ENCODE measurements at regions of chr22 and their contacts with region 1.

Region 1: GRCh38 chr22:33057363-33057995 is 702 bp downstream of the SYN3 start:
- DNase-seq: no peak
- H3K4me3 ChIP-seq: peak overlapping the region in 1 of 2 experiments; percentile 46; a peak in 2 of 4 replicates
- H3K27ac ChIP-seq: no peak overlapping the region
- H3K4me1 ChIP-seq: peaks cover 0 to 2% of the 10 kb centered on the region in 2 experiments; a peak in 1 of 4 replicates
- H3K27me3 ChIP-seq: no peaks in the 10 kb centered on the region; the same call in 1 of the 2 replicates
- CTCF ChIP-seq: no peak
- EP300 ChIP-seq: no peak
- RAD21 ChIP-seq: no peak

Region 2: DNA sequence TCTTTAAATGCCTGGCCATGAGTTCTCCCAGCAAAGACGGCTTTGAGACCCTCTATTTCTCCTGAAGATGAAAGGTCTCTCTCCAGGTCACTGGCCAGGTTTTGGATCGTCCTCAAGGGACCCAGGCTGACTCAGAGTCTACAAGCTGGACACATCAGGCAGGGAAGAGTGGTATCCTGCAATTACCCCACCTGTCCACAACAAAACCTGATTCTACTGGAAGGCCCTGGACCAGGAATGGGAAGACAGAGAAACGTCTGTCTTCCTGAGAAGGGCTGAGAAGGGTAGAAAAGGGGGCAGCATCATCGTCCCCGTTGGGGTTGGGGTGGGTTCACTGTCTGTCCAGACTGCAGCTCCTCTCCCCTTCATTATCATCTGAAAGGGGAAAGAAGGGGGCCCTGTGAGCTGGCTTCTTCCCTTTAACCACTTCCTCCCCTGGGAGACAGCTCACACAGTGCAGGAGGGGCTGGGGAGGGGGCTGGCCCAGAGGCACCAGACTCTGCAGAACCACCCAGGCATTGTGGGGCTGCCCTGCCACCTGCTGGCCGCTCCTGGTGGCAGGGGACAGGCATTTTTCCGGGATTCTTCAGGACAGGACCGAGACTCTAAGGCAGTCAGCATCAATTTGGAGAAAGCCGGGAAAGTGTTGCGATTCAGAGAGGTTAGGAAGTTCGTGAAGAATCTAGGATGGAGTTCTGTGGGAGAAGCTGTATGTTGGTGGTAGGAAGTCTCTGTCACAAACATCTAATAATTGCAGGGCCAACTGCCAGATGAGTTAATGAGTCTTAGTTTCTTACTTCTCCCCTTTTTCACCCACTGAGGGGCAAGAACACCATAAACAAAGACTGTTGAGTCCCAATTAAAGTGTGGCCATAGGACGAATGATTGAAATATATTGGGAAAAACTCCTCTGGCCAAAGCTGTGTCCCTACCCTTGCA is 56.9 kb before region 1 on chr22:
- CTCF ChIA-PET with region 1: interaction called, 12 read pairs
- POLR2A ChIA-PET with region 1: no interaction called
- DNase-seq: peak; percentile 82
- H3K4me3 ChIP-seq: no peak overlapping the region; a peak in 1 of 4 replicates
- H3K27ac ChIP-seq: no peak overlapping the region
- H3K4me1 ChIP-seq: no peaks in the 10 kb centered on the region; a peak in 1 of 4 replicates
- H3K27me3 ChIP-seq: no peaks in the 10 kb centered on the region
- CTCF ChIP-seq: peak; percentile 84
- EP300 ChIP-seq: no peak
- RAD21 ChIP-seq: peak; percentile 94

Region 3: GRCh38 chr22:33076343-33076742 is 18.9 kb after region 1 on chr22:
- CTCF ChIA-PET with region 1: interaction called, 18 read pairs
- POLR2A ChIA-PET with region 1: no interaction called
- DNase-seq: no peak
- H3K4me3 ChIP-seq: no peak overlapping the region
- H3K27ac ChIP-seq: no peak overlapping the region
- H3K4me1 ChIP-seq: peaks cover 0 to 2% of the 10 kb centered on the region in 2 experiments; a peak in 1 of 4 replicates
- H3K27me3 ChIP-seq: no peaks in the 10 kb centered on the region
- CTCF ChIP-seq: no peak
- EP300 ChIP-seq: no peak
- RAD21 ChIP-seq: no peak

Region 4: DNA sequence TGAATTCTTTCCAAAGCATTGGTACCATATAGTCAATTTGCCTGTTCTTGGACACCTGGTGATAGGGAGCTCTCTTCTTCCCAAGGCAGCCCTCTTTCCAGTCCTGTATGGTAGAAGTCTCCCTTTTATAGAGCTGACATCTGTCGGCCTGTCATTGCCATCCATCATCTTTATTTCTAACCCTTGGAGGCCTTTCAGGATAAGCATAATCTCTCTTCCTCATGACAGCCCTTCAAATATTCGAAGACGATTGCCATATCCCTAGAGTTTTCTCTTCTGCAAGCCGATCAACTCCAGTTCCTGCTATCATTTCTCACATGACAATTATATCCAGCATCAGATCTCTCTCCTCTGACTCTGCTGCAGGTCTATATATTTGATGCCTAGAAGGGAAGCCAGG is 33.4 kb after region 1 on chr22:
- CTCF ChIA-PET with region 1: no interaction called
- POLR2A ChIA-PET with region 1: no interaction called
- DNase-seq: no peak
- H3K4me3 ChIP-seq: no peak overlapping the region
- H3K27ac ChIP-seq: no peak overlapping the region
- H3K4me1 ChIP-seq: no peaks in the 10 kb centered on the region
- H3K27me3 ChIP-seq: no peaks in the 10 kb centered on the region
- CTCF ChIP-seq: no peak
- EP300 ChIP-seq: no peak
- RAD21 ChIP-seq: no peak

Region 5: GRCh38 chr22:33110562-33111163 is 53.2 kb after region 1 on chr22:
- CTCF ChIA-PET with region 1: interaction called, 11 read pairs
- POLR2A ChIA-PET with region 1: no interaction called
- DNase-seq: no peak
- H3K4me3 ChIP-seq: no peak overlapping the region
- H3K27ac ChIP-seq: no peak overlapping the region
- H3K4me1 ChIP-seq: peaks cover 0 to 10% of the 10 kb centered on the region in 2 experiments; a peak in 2 of 4 replicates
- H3K27me3 ChIP-seq: no peaks in the 10 kb centered on the region
- CTCF ChIP-seq: no peak
- EP300 ChIP-seq: no peak
- RAD21 ChIP-seq: no peak

Region 6: DNA sequence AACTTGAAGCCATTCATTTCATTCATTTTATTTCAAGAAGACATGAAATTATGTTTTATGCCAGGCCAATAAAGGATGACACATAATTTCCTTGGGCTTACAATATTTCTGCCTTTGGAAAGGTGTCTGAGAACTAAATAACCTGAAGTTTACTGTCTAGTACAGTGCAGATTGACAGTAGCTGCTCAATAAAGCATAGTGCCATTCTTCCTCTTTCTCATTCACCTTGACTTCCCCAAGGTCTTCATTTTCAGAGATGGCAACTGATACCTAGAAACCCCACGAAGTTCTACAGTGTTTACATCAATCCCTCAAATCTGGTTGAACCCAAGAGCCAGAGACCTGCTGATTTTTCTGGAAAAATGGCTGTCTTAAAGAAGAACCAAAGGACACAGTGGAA is 145.0 kb after region 1 on chr22:
- CTCF ChIA-PET with region 1: interaction called, 17 read pairs
- POLR2A ChIA-PET with region 1: no interaction called
- DNase-seq: no peak
- H3K4me3 ChIP-seq: no peak overlapping the region
- H3K27ac ChIP-seq: no peak overlapping the region
- H3K4me1 ChIP-seq: no peaks in the 10 kb centered on the region; a peak in 1 of 4 replicates
- H3K27me3 ChIP-seq: no peaks in the 10 kb centered on the region
- CTCF ChIP-seq: no peak
- EP300 ChIP-seq: no peak
- RAD21 ChIP-seq: no peak

Measured in SK-N-SH (cell line).